HepG2 (cell line): ENCODE measurements at regions of chr22 and their contacts with region 1.

Region 1: GRCh38 chr22:31223786-31224191 is 11.7 kb downstream of the LIMK2 start:
- DNase-seq: peak; percentile 94
- ATAC-seq: peak; percentile 89
- H3K4me3 ChIP-seq: peak overlapping the region in 1 of 3 experiments; percentile 21; a peak in 1 of 6 replicates
- H3K27ac ChIP-seq: peak overlapping the region; percentile 91
- H3K4me1 ChIP-seq: peaks cover 91% of the 10 kb centered on the region
- H3K27me3 ChIP-seq: no peaks in the 10 kb centered on the region
- CTCF ChIP-seq: no peak
- EP300 ChIP-seq: peak in 1 of 2 experiments; percentile 73; a peak in 2 of 4 replicates
- POLR2A ChIP-seq: peak in 1 of 2 experiments; percentile 60; a peak in 1 of 4 replicates
- RAD21 ChIP-seq: 0 out of 2 replicates have a peak, but pooled peaks have one; percentile 9

Region 2: GRCh38 chr22:31160328-31160978 is 63.3 kb before region 1 on chr22:
- CTCF ChIA-PET with region 1: no interaction called
- POLR2A ChIA-PET with region 1: interaction called, 11 read pairs
- in situ Hi-C with region 1: no loop called
- intact Hi-C with region 1: no loop called
- DNase-seq: no peak
- ATAC-seq: peak; percentile 79
- H3K4me3 ChIP-seq: peak overlapping the region; percentile 84 to 92 (median 90)
- H3K27ac ChIP-seq: peak overlapping the region; percentile 64
- H3K4me1 ChIP-seq: peaks cover 29% of the 10 kb centered on the region
- H3K27me3 ChIP-seq: no peaks in the 10 kb centered on the region; a peak in 1 of 5 replicates
- CTCF ChIP-seq: no peak
- EP300 ChIP-seq: no peak
- POLR2A ChIP-seq: no peak
- RAD21 ChIP-seq: no peak

Region 3: DNA sequence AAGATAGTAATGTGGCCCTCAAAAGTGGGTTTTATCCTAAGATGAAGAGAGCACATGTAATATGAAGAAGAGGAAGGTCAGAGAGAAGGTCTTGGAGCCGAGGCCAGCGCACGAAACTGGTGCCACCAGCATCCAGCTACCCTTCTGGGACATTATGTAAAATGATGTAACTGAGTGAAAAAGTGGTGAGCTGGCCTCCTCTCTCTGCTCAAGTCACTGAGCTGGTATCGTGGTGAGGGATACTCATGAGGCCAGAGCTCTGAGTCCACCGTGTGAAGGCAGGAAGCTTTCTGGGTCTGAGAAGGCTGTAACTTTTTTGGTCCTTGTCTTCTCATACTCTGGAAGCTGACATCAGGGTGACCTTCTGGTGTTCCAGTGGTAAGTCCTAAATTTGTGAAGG is 38.7 kb before region 1 on chr22:
- CTCF ChIA-PET with region 1: no interaction called
- POLR2A ChIA-PET with region 1: no interaction called
- in situ Hi-C with region 1: no loop called
- intact Hi-C with region 1: no loop called
- DNase-seq: no peak
- ATAC-seq: no peak
- H3K4me3 ChIP-seq: no peak overlapping the region
- H3K27ac ChIP-seq: no peak overlapping the region
- H3K4me1 ChIP-seq: no peaks in the 10 kb centered on the region
- H3K27me3 ChIP-seq: no peaks in the 10 kb centered on the region
- CTCF ChIP-seq: no peak
- EP300 ChIP-seq: no peak
- POLR2A ChIP-seq: no peak
- RAD21 ChIP-seq: no peak

Region 4: GRCh38 chr22:31241200-31241599 is 17.4 kb after region 1 on chr22:
- CTCF ChIA-PET with region 1: no interaction called
- POLR2A ChIA-PET with region 1: no interaction called
- in situ Hi-C with region 1: no loop called
- intact Hi-C with region 1: no loop called
- DNase-seq: peak; percentile 19
- ATAC-seq: no peak; the same call in 2 of the 3 replicates
- H3K4me3 ChIP-seq: no peak overlapping the region
- H3K27ac ChIP-seq: no peak overlapping the region
- H3K4me1 ChIP-seq: peaks cover 36% of the 10 kb centered on the region
- H3K27me3 ChIP-seq: no peaks in the 10 kb centered on the region
- CTCF ChIP-seq: no peak
- EP300 ChIP-seq: no peak
- POLR2A ChIP-seq: no peak
- RAD21 ChIP-seq: no peak